Activated naive CD8-positive, alpha-beta T cell treated with anti-CD3 and anti-CD28 coated beads, Interleukin-2, amount 10 ng/mL, durations not matched to agents 7 days and 5 days (primary cell): ENCODE measurements at regions of chr9 and their contacts with region 1.

Region 1: DNA sequence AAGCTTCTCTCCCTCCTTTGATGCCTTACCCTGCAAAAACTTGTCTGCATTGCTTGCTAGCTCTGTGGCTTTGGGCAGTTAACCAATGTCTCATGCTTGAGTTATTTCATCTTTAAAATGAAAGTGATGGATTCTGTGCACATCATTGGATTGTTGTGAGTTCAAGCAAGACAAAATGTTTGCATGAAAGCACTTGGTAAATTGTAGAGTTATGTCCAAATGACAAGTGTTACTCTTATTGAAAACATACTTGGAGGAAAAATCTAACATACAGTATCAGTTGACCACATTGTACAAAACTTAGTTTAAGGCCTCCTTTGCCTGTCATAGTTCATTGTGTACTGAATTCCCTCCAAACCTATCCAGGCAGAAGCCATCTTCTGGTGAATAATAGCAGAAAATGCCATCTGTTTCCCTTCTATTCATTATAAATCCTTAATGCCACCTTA is 30.0 kb downstream of the TGFBR1 start:
- DNase-seq: no peak
- ATAC-seq: peak; percentile 53
- H3K4me3 Mint-ChIP-seq: peak overlapping the region; percentile 65
- H3K27ac Mint-ChIP-seq: peak overlapping the region; percentile 71
- H3K4me1 Mint-ChIP-seq: peaks cover 61% of the 10 kb centered on the region
- H3K27me3 Mint-ChIP-seq: no peaks in the 10 kb centered on the region

Region 2: DNA sequence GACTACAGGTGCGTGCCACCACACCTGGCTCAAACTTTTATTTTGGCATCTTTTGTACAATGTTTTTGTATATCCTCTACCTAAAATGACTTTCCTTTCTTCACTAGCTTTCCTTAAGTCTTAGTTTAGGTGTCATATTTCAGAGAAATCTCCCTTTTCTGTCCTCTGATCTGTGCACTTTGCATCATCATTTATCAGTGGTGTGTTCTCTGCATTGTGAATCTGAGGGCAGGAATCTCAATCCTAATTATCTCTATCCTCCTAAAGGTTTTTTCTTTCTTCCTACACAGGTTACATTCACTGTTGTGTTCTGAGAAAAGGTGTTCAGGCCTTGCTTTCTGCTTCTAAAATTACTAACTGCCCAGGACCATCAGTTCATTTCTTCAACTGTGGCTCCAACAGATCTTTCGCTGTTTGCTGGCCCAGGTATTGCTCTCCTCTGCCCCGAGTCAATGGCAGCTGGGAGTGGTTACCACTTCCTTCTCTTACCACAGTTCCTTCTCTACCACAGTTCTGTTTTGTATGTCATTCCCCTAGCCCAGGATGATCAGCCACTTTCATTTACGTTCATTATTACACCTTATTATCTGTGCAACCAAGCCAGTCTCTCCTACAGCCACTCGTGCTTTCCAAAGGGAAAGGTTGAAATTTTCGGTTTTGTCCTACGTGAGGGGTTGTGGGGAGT is 16.0 kb before region 1 on chr9:
- POLR2A ChIA-PET with region 1: interaction called, 14 read pairs
- DNase-seq: no peak
- ATAC-seq: peak; percentile 99
- H3K4me3 Mint-ChIP-seq: peak overlapping the region; percentile 83
- H3K27ac Mint-ChIP-seq: peak overlapping the region; percentile 93
- H3K4me1 Mint-ChIP-seq: peaks cover 70% of the 10 kb centered on the region
- H3K27me3 Mint-ChIP-seq: no peaks in the 10 kb centered on the region

Region 3: DNA sequence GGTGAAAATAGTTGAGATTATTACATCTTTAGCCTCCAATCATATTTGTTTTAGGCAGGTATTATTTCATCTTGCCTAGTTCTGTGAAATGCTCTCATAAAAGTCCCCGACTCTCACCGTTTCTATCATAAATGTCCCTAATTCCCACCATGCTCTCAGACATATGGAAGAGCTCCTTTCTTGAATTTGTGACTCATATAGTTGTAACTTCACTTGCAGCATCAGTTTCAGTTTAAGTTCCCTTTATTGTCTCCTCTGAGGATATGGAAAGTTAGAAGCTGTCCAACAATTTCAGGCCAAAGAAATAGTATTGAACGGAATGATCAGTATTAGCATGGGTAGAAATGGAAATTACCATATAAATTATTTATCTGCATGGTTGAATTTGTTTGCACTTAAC is 499.3 kb after region 1 on chr9:
- POLR2A ChIA-PET with region 1: no interaction called
- DNase-seq: no peak
- ATAC-seq: no peak
- H3K4me3 Mint-ChIP-seq: no peak overlapping the region
- H3K27ac Mint-ChIP-seq: no peak overlapping the region
- H3K4me1 Mint-ChIP-seq: no peaks in the 10 kb centered on the region
- H3K27me3 Mint-ChIP-seq: peaks cover 14% of the 10 kb centered on the region